ENCODE measurements at regions of chr17 and their contacts with region 1.

Region 1: GRCh38 chr17:66466840-66467367 is 164.5 kb downstream of the PRKCA start:
- DNase-seq: peak; percentile 96
- H3K4me3 Mint-ChIP-seq: peak overlapping the region; percentile 70
- H3K27ac Mint-ChIP-seq: peak overlapping the region; percentile 84
- H3K4me1 Mint-ChIP-seq: peaks cover 33% of the 10 kb centered on the region
- H3K27me3 Mint-ChIP-seq: no peaks in the 10 kb centered on the region
- CTCF ChIP-seq: no peak

Region 2: DNA sequence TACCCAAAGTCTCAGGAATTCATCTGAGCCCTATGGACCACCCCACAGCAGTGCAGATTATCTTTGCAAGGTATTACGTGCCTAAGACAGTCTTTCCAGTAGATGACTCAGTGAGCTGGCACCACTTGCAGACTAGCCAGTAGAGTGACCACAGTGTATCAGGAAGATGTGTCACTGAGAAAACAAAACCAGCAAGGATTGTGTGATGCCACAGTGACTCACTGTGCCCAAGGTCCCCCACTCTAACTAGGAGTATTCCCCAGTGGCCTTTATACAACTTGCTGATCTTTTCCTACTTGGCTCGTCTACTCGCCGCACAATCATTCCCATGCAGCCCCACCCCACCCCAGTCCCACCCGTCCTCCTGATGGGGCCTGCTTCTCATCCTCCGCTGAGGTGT is 191.3 kb before region 1 on chr17:
- CTCF ChIA-PET with region 1: no interaction called
- POLR2A ChIA-PET with region 1: no interaction called
- intact Hi-C with region 1: loop called (anchors 10 kb)
- DNase-seq: peak; percentile 96
- H3K4me3 Mint-ChIP-seq: no peak overlapping the region
- H3K27ac Mint-ChIP-seq: no peak overlapping the region
- H3K4me1 Mint-ChIP-seq: peaks cover 28% of the 10 kb centered on the region
- H3K27me3 Mint-ChIP-seq: no peaks in the 10 kb centered on the region
- CTCF ChIP-seq: no peak

Region 3: DNA sequence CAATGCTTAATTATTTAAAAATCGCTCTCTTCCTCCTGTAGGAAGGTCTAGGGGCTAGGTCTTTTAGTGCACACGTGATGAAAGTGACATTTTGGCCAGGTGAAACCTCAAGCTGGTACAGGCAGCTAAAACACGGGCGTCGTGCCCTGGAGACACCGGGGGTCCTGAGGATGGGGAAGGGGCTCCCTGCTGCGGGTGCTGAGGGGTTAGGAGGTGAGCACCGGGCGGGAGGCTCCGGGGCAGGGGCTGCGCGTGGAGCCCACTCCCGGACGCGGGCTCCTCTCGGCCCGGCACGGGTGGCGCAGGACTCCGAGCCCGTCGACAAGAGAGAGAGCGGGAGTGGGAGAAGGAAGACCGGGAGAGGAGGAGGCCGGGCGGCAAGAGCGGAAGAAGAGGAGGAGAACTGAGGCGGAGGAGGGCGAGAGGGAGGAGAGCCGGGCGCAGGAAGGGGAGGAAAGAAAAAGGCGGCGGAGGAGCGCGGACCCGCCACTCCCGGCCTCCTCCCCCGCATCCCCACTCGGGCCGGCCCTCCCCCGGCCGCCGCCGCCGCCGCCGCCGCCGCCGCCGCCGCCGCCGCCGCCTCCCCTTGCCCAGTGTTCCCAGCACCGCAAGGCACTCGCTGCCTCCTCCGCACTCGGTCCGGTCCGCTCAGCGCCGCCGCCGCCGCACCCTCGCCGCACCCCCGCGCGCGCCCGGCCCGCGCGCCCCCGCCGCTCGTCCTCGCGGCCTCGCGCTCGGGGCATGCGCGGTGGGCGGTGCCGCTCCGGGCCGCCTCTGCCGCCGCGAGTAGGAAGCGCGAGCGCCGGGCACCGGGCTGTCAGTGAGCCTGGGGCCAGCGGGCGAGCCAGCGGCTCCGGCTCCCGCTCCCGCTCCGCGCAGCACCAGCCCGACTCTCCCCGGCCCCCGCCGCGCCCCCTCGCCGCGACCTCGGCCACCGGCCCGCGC is 164.8 kb before region 1 on chr17 and contains the start of gene PRKCA:
- CTCF ChIA-PET with region 1: interaction called, 3 read pairs
- POLR2A ChIA-PET with region 1: interaction called, 14 read pairs
- intact Hi-C with region 1: loop called (anchors 1 kb)
- DNase-seq: peak; percentile 63
- H3K4me3 Mint-ChIP-seq: peak within 1 kb of the TSS; percentile 96
- H3K27ac Mint-ChIP-seq: peak within 1 kb of the TSS; percentile 97
- H3K4me1 Mint-ChIP-seq: peaks cover 35% of the 10 kb centered on the region
- H3K27me3 Mint-ChIP-seq: no peaks in the 10 kb centered on the region
- CTCF ChIP-seq: no peak
- total RNA-seq, gene PRKCA: 20.7 and 22.8 TPM in 2 replicates

Region 4: DNA sequence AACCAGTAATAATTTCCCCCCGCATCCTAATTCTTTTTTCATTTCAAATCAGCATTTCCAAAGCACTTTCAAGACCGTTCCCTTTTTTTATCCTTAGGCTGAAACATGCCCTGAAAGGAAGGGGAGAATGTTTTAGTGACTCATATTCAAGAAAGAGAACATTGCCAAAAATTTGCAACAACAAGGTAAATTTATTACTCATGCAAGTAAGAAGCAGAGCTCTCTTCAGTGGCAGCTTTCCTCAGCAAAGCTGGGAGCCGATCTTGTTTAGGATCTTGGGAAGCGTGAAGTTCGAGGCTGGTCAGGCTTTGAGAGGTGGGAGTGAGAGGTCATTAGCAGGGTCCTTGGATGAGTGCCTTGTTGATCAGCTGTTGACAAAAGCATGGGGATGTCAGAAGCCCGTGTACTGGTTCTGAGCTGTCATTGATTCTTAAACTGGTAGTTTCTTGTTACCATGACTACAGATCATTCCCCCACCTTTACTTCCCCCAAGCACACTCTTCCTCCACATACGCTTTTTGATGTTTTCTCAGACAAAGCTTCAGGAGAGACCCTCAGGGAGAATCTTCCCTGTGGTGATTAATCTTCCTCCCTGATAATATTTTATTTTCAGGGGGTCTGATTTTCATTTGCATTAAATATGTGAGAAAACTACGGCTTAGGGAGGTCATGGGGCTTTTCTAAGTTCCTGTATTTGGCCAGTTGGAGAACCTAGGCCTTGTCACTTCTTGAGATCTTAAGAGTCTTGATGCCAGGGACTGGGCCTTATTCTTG is 34.8 kb before region 1 on chr17:
- CTCF ChIA-PET with region 1: interaction called, 3 read pairs
- POLR2A ChIA-PET with region 1: interaction called, 5 read pairs
- intact Hi-C with region 1: loop called (anchors 2 kb)
- DNase-seq: peak; percentile 80
- H3K4me3 Mint-ChIP-seq: peak overlapping the region; percentile 67
- H3K27ac Mint-ChIP-seq: peak overlapping the region; percentile 95
- H3K4me1 Mint-ChIP-seq: peaks cover 20% of the 10 kb centered on the region
- H3K27me3 Mint-ChIP-seq: no peaks in the 10 kb centered on the region
- CTCF ChIP-seq: no peak

Region 5: DNA sequence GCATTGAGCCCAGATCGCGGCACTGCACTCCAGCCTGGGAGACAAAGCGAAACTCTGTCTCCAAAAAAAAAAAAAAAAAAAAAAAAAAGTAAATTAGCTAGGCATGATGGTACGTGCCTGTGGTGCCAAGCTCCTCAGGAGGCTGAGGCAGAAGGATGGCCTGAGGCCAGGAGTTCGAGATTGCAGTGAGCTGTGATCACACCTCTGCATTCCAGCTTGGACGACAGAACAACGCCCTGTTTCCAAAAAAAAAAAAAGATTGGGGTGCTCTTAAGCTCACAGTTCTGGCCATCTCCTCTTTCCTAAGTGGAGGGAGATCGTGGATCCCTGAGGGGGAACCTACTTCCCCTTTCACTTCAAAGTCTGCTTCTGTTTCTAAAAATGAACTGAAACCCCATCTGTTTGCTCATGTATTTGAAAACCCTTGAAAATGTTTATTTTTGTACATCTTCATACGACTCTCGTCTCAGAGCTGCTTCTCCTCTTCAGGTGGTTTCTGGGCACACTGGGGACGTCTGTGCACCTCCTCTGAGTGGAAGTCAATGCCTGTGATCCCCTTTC is 25.7 kb before region 1 on chr17:
- CTCF ChIA-PET with region 1: no interaction called
- POLR2A ChIA-PET with region 1: interaction called, 10 read pairs
- intact Hi-C with region 1: no loop called
- DNase-seq: peak; percentile 37
- H3K4me3 Mint-ChIP-seq: no peak overlapping the region
- H3K27ac Mint-ChIP-seq: no peak overlapping the region
- H3K4me1 Mint-ChIP-seq: peaks cover 10% of the 10 kb centered on the region
- H3K27me3 Mint-ChIP-seq: no peaks in the 10 kb centered on the region
- CTCF ChIP-seq: no peak

Region 6: DNA sequence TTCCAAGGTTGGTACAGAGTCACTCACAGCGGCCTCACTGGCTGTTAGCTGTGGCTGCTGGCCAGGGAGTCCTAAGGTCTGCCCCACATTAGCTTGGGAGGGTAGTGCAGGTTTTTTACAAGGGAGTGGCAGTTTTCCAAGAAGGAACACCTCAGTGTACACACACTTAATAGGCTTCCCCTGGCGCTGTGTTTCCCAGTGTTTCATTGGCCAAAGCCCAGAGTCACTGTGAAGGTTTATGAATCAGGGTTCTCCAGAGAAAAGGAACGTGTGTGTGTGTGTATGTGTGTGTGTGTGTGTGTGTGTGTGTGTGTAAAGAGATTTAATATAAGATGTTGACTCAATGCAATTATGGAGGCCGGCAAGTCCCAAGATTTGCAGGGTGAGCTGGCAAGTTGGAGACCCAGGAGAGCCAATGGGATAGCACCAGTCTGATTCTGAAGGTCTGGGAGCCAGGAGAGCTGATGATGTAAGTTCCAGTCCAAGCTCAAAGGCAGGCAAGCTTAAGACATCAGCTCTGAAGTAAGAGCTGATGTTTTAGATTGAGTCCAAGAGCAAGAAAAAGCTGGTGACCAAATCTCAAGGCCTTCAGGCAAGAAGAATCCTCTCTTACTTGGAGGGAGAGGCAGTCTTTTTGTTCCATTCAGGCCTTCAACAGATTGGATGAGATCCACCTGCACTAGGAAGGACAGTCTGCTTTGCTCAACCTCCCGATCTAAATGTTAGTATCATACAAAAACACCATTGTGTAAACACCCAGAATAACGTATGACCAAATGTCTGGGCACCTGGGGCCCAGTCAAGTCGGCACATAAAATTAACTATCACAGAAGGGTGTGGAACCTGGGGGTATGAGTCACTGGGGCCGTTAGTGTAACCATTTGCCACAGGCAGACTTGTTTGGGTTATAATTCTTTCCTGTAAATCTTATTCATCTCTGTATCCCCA is 42.3 kb after region 1 on chr17:
- CTCF ChIA-PET with region 1: interaction called, 3 read pairs
- POLR2A ChIA-PET with region 1: interaction called, 23 read pairs
- intact Hi-C with region 1: loop called (anchors 5 kb)
- DNase-seq: peak; percentile 90
- H3K4me3 Mint-ChIP-seq: peak overlapping the region; percentile 35
- H3K27ac Mint-ChIP-seq: peak overlapping the region; percentile 79
- H3K4me1 Mint-ChIP-seq: peaks cover 41% of the 10 kb centered on the region
- H3K27me3 Mint-ChIP-seq: no peaks in the 10 kb centered on the region
- CTCF ChIP-seq: no peak

Region 7: GRCh38 chr17:66552371-66552770 is 85.5 kb after region 1 on chr17:
- CTCF ChIA-PET with region 1: no interaction called
- POLR2A ChIA-PET with region 1: no interaction called
- intact Hi-C with region 1: no loop called
- DNase-seq: no peak
- H3K4me3 Mint-ChIP-seq: no peak overlapping the region
- H3K27ac Mint-ChIP-seq: no peak overlapping the region
- H3K4me1 Mint-ChIP-seq: peaks cover 6% of the 10 kb centered on the region
- H3K27me3 Mint-ChIP-seq: no peaks in the 10 kb centered on the region
- CTCF ChIP-seq: no peak

Region 8: DNA sequence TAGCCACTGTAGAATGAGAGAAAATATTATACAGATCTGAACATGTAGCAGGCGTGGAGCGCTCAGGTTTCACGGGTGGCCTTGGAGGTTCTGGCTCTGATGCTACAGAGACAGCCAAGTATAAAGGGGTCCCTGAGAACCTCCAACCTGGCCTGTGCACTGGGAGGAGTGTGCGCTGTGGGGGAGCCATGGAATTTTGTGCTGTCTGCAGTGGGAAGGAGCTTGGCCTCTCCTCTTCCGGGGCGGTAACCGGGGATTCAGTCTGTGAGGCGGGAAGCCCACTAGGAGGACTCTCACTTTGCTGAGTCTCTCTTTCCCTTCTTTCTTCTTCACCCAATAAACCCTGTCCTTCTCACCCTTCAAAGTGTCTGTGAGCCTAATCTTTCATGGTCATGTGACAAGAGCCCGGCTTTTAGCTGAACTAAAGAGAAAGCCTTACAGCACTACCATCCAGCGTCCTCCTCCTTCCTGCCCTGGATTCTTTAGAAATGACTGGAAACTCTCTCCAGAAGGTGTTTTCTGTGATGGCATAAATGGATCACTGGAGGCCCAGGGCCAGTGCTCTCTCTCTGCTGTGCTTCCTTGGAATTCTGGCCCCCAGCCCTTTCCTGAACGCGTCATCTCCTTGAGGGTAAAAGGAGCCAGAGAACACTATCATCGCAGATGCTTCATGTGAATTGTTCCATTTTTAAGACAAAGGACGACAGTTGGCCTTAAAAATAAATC is 135.9 kb after region 1 on chr17:
- CTCF ChIA-PET with region 1: no interaction called
- POLR2A ChIA-PET with region 1: no interaction called
- intact Hi-C with region 1: no loop called
- DNase-seq: no peak
- H3K4me3 Mint-ChIP-seq: no peak overlapping the region
- H3K27ac Mint-ChIP-seq: no peak overlapping the region
- H3K4me1 Mint-ChIP-seq: no peaks in the 10 kb centered on the region
- H3K27me3 Mint-ChIP-seq: no peaks in the 10 kb centered on the region
- CTCF ChIP-seq: no peak